ENCODE measurements at regions of chr3 and their contacts with region 1.

Region 1: DNA sequence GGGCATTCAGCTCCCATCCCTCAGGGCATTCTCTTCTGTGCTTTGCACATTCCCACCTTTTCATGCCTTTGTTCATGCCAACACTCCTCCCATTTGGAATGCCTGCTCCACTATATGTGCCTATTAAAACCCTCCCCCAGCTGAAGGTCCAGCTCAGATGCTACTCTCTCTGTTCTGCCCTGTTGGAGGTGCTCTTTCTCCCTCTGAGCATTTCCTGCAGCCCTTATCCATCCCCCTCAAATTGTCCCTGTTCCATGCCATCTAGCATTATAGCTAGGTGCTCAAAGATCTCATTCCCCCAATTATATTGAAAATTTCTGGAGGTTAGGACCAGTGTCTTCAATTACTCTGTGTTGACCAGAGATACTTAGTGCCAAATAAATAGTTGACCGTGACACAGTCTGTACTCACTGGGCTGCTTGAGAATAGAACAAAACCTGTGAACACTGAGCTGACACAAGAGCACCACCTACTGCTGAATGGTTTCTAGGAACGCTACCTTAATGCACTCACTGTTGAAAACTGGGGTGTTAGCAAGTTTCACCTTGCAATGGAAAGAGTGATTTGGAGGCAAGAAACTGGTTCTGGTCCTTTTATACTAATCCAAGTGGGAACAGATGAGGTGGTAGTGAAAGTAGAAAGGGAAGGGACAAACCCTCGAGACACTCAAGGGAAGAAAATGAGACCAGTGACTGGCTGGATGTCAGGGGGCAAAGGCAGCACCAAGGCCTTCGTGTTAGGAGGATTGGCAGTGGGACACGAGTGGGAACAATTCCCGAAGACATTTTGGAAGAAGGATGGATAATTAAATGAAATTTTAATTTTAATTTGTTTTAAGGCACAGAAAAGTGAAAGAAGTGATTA is 289.8 kb upstream of the ROPN1 start:
- DNase-seq: no peak
- H3K4me3 ChIP-seq: no peak overlapping the region
- H3K27ac ChIP-seq: peak overlapping the region; percentile 83 to 89
- H3K4me1 ChIP-seq: peaks cover 4 to 99% (median 82%) of the 10 kb centered on the region in 4 donors
- H3K27me3 ChIP-seq: no peaks in the 10 kb centered on the region
- CTCF ChIP-seq: peak; percentile 52 to 60

Region 2: DNA sequence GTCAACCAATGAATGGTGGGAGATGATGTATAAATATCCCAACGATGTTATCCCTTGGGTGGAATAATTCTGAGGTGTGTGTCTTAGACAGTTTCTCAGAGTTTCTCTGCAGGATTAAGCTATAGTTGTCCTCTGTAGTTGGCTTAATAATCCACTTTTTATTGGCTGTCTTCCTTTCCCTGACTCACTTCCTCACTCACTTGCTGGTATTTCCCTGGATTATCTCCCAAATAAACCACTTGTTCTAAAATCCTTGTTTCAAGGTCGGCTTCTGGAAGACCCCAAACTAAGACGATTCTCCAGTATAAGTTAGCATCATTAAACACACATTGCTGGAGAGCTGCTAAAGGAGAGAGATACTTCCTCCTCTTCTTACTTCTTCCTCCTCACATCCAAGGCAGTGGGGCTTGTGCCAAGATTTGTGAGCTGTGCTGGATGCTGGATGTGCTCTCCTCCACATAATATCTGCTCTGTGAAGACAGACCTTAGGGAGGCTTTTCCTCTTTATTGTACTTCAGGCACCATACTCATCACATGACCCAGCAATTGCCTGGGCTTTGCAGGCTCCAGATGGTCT is 267.2 kb before region 1 on chr3:
- intact Hi-C with region 1: loop called (anchors 5 kb)
- DNase-seq: no peak
- H3K4me3 ChIP-seq: no peak overlapping the region
- H3K27ac ChIP-seq: peak overlapping the region; percentile 21 to 56
- H3K4me1 ChIP-seq: peaks cover 0 to 36% (median 6%) of the 10 kb centered on the region in 4 donors
- H3K27me3 ChIP-seq: no peaks in the 10 kb centered on the region
- CTCF ChIP-seq: no peak

Region 3: GRCh38 chr3:124032648-124033359 is 248.9 kb before region 1 on chr3:
- intact Hi-C with region 1: loop called (anchors 5 kb)
- DNase-seq: peak; percentile 76 to 92
- H3K4me3 ChIP-seq: peak overlapping the region; percentile 80 to 90
- H3K27ac ChIP-seq: peak overlapping the region; percentile 86 to 96
- H3K4me1 ChIP-seq: peaks cover 0 to 28% (median 4%) of the 10 kb centered on the region in 4 donors
- H3K27me3 ChIP-seq: no peaks in the 10 kb centered on the region
- CTCF ChIP-seq: peak; percentile 72 to 83

Region 4: GRCh38 chr3:124084022-124084881 is 197.4 kb before region 1 on chr3:
- intact Hi-C with region 1: loop called (anchors 5 kb)
- DNase-seq: no peak
- H3K4me3 ChIP-seq: no peak overlapping the region
- H3K27ac ChIP-seq: peak overlapping the region; percentile 64 to 72
- H3K4me1 ChIP-seq: peaks cover 0 to 61% (median 20%) of the 10 kb centered on the region in 4 donors
- H3K27me3 ChIP-seq: no peaks in the 10 kb centered on the region
- CTCF ChIP-seq: no peak

Region 5: GRCh38 chr3:124409789-124410261 is 128.1 kb after region 1 on chr3:
- intact Hi-C with region 1: no loop called
- DNase-seq: no peak
- H3K4me3 ChIP-seq: no peak overlapping the region
- H3K27ac ChIP-seq: peak overlapping the region; percentile 8 to 18
- H3K4me1 ChIP-seq: peaks cover 0 to 24% (median 3%) of the 10 kb centered on the region in 4 donors
- H3K27me3 ChIP-seq: no peaks in the 10 kb centered on the region
- CTCF ChIP-seq: no peak